PC-3 (cell line): ENCODE measurements at regions of chr6 and their contacts with region 1.

Region 1: GRCh38 chr6:160810235-160810634 is 108.2 kb downstream of the PLG start:
- DNase-seq: peak; percentile 95
- ATAC-seq: peak; percentile 90
- H3K4me3 ChIP-seq: peak overlapping the region; percentile 47
- H3K27ac ChIP-seq: peak overlapping the region; percentile 99
- H3K4me1 ChIP-seq: peaks cover 51% of the 10 kb centered on the region
- H3K27me3 ChIP-seq: no peaks in the 10 kb centered on the region
- CTCF ChIP-seq: no peak

Region 2: GRCh38 chr6:160750276-160750689 is 60.0 kb before region 1 on chr6:
- CTCF ChIA-PET with region 1: no interaction called
- POLR2A ChIA-PET with region 1: no interaction called
- intact Hi-C with region 1: loop called (anchors 5 kb)
- DNase-seq: peak; percentile 58
- ATAC-seq: peak; percentile 76
- H3K4me3 ChIP-seq: no peak overlapping the region
- H3K27ac ChIP-seq: 0 out of 2 replicates have a peak overlapping the region, but pooled peaks have one; percentile 16
- H3K4me1 ChIP-seq: no peaks in the 10 kb centered on the region; the same call in 1 of the 2 replicates
- H3K27me3 ChIP-seq: no peaks in the 10 kb centered on the region
- CTCF ChIP-seq: peak; percentile 91

Region 3: GRCh38 chr6:160795721-160796120 is 14.5 kb before region 1 on chr6:
- CTCF ChIA-PET with region 1: interaction called, 7 read pairs
- POLR2A ChIA-PET with region 1: interaction called, 5 read pairs
- intact Hi-C with region 1: loop called (anchors 1 kb)
- DNase-seq: peak; percentile 85
- ATAC-seq: peak; percentile 28
- H3K4me3 ChIP-seq: no peak overlapping the region
- H3K27ac ChIP-seq: peak overlapping the region; percentile 82
- H3K4me1 ChIP-seq: peaks cover 44% of the 10 kb centered on the region
- H3K27me3 ChIP-seq: no peaks in the 10 kb centered on the region
- CTCF ChIP-seq: no peak